Psoas muscle (tissue), 8 donors: ENCODE measurements at regions of chr4 and their contacts with region 1.

Region 1: GRCh38 chr4:173169428-173170181 is 994 bp downstream of the GALNT7 start:
- DNase-seq: peak; percentile 61 to 80
- ATAC-seq: peak; percentile 56 to 70 (median 64)
- H3K4me3 ChIP-seq: peak overlapping the region; percentile 81
- H3K27ac ChIP-seq: peak overlapping the region; percentile 69
- H3K4me1 ChIP-seq: peaks cover 6% of the 10 kb centered on the region
- H3K27me3 ChIP-seq: peaks cover 0 to 31% (median 0%) of the 10 kb centered on the region in 3 donors
- CTCF ChIP-seq: no peak

Region 2: DNA sequence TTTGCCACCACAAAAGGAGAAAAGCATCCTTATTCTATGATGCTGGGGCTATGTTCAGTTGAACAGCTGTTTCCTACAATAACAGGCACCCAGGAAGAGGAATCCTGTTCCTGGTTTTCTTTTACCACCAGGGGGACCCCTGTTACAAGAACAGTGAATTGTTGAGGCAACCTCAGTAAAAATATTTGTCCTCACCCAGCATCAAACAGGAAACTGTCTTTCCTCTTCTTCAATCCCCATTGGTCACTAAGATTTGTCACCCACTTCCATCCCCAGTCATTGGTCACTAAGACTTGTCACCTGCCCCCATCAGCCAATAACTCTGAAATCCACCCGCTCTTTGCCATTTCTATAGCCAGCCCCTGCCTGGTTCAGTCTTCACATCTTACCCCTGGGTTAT is 144.5 kb before region 1 on chr4:
- intact Hi-C with region 1: loop called in 1 of 2 experiments (anchors 10 kb)
- DNase-seq: no peak
- ATAC-seq: peak in 3 of 4 donors; percentile 43 to 68 (median 53)
- H3K4me3 ChIP-seq: no peak overlapping the region
- H3K27ac ChIP-seq: no peak overlapping the region
- H3K4me1 ChIP-seq: no peaks in the 10 kb centered on the region
- H3K27me3 ChIP-seq: no peaks in the 10 kb centered on the region
- CTCF ChIP-seq: peak; percentile 55